ENCODE measurements at regions of chr9 and their contacts with region 1.

Region 1: DNA sequence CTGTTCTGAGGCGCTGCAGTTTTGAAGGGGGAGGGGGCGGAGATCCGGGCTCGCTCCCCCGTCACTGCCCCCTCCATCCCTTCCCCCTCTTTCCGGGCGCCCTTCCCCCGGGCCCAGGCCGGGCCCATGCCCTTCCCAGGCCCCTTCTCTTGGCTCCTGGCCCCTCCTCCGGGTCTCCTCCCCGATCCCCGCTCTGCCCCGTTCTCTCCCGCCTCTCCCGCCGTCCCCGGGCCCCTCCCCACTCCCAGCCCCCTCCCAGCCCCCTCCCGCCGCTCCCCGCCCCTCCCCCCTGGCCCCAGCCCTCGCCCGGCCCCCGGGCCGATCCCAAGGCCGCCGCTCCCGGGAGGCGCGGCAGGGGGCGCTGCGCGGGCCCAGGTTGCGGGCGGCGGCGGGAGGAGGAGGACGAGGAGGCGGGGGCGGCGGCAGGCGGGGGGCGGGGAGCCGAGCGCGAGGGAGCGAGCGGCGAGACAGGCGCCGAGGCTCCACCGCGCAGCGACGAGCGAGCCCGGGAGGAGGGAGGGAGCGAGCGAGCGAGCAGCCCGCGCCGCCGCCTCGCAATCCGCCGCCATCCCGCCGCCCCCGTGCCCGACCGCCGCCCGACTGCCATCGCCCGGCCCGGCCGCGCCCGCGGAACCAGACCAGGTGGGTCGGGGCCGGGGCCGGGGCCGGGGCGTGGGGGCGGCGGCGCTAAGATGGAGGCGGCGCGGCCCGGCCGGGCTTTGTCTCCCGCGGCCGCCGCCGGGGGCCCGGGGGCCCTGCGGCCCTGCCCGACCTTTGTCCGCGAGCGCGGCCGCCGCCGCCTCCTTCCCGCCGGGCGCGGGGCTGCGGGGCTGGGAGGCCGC is at the start of gene PRRC2B:
- DNase-seq: peak; percentile 76 to 96 (median 86)
- ATAC-seq: peak; percentile 45
- H3K4me3 ChIP-seq: peak within 1 kb of the TSS; percentile 65
- H3K4me3 Mint-ChIP-seq: peak within 1 kb of the TSS; percentile 95
- H3K27ac ChIP-seq: peak within 1 kb of the TSS; percentile 67 to 96
- H3K27ac Mint-ChIP-seq: peak within 1 kb of the TSS; percentile 96
- H3K4me1 ChIP-seq: peaks cover 50% of the 10 kb centered on the region
- H3K4me1 Mint-ChIP-seq: peaks cover 54% of the 10 kb centered on the region
- H3K27me3 ChIP-seq: no peaks in the 10 kb centered on the region
- H3K27me3 Mint-ChIP-seq: no peaks in the 10 kb centered on the region
- CTCF ChIP-seq: no peak
- total RNA-seq, gene PRRC2B: 256 to 268 TPM

Region 2: GRCh38 chr9:131277910-131278701 is 115.7 kb before region 1 on chr9:
- CTCF ChIA-PET with region 1: no interaction called
- POLR2A ChIA-PET with region 1: no interaction called
- intact Hi-C with region 1: loop called (anchors 5 kb)
- DNase-seq: peak; percentile 45 to 89 (median 66)
- ATAC-seq: peak; percentile 55
- H3K4me3 ChIP-seq: peak overlapping the region; percentile 99
- H3K4me3 Mint-ChIP-seq: peak overlapping the region; percentile 93
- H3K27ac ChIP-seq: peak overlapping the region; percentile 73 to 82
- H3K27ac Mint-ChIP-seq: peak overlapping the region; percentile 94
- H3K4me1 ChIP-seq: peaks cover 32% of the 10 kb centered on the region
- H3K4me1 Mint-ChIP-seq: peaks cover 32% of the 10 kb centered on the region
- H3K27me3 ChIP-seq: peaks cover 0 to 9% of the 10 kb centered on the region in 2 experiments
- H3K27me3 Mint-ChIP-seq: no peaks in the 10 kb centered on the region
- CTCF ChIP-seq: no peak

Region 3: DNA sequence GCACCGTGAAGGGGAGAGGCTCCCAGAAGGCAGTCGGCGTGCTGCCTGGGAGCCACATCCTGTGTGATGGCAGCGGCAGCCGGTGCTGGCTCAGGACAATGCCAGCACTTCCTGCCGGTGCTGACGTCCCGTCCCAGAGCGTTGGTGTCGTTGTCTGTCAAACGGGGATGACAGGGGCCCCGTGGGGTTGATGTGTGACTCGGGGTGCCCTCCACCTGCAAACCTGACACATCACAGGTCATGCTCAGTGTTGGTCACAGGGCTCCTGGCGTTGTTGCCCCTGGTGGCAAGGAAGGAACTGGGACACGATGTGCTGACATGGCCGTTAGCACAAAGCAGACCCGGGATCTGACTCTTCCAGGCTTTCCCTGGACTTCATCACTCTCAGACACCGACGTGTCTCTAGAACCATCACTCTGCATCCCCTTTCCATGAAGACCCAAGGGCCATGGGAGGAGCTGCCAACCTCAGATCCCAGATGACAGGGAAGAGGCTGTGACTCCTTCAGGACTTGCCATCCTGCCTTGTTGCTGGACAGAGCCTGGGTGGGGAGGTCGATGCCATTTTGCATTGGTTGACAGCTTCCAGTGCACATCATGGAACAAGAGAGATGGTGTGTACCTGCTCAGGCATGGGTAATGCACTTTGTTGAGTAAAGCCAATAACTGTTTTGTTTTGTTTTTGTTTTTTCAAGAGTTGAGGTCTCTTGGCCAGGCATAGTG is 82.8 kb before region 1 on chr9:
- CTCF ChIA-PET with region 1: no interaction called
- POLR2A ChIA-PET with region 1: no interaction called
- intact Hi-C with region 1: no loop called
- DNase-seq: peak; percentile 36 to 88 (median 60)
- ATAC-seq: peak; percentile 98
- H3K4me3 ChIP-seq: peak overlapping the region; percentile 40
- H3K4me3 Mint-ChIP-seq: peak overlapping the region; percentile 54
- H3K27ac ChIP-seq: no peak overlapping the region
- H3K27ac Mint-ChIP-seq: peak overlapping the region; percentile 73
- H3K4me1 ChIP-seq: peaks cover 15% of the 10 kb centered on the region
- H3K4me1 Mint-ChIP-seq: peaks cover 16% of the 10 kb centered on the region
- H3K27me3 ChIP-seq: no peaks in the 10 kb centered on the region
- H3K27me3 Mint-ChIP-seq: no peaks in the 10 kb centered on the region
- CTCF ChIP-seq: no peak

Region 4: GRCh38 chr9:131366761-131367401 is 27.0 kb before region 1 on chr9:
- CTCF ChIA-PET with region 1: no interaction called
- POLR2A ChIA-PET with region 1: interaction called, 13 read pairs
- intact Hi-C with region 1: no loop called
- DNase-seq: peak in 3 of 14 experiments; percentile 7 to 34 (median 25)
- ATAC-seq: no peak
- H3K4me3 ChIP-seq: no peak overlapping the region
- H3K4me3 Mint-ChIP-seq: no peak overlapping the region
- H3K27ac ChIP-seq: no peak overlapping the region
- H3K27ac Mint-ChIP-seq: no peak overlapping the region
- H3K4me1 ChIP-seq: peaks cover 2% of the 10 kb centered on the region
- H3K4me1 Mint-ChIP-seq: peaks cover 6% of the 10 kb centered on the region
- H3K27me3 ChIP-seq: no peaks in the 10 kb centered on the region
- H3K27me3 Mint-ChIP-seq: no peaks in the 10 kb centered on the region
- CTCF ChIP-seq: peak; percentile 40

Region 5: GRCh38 chr9:131418143-131419028 is 24.5 kb after region 1 on chr9:
- CTCF ChIA-PET with region 1: interaction called, 7 read pairs
- POLR2A ChIA-PET with region 1: interaction called, 26 read pairs
- intact Hi-C with region 1: no loop called
- DNase-seq: no peak
- ATAC-seq: no peak
- H3K4me3 ChIP-seq: no peak overlapping the region
- H3K4me3 Mint-ChIP-seq: peak overlapping the region; percentile 80
- H3K27ac ChIP-seq: no peak overlapping the region
- H3K27ac Mint-ChIP-seq: peak overlapping the region; percentile 70
- H3K4me1 ChIP-seq: peaks cover 84% of the 10 kb centered on the region
- H3K4me1 Mint-ChIP-seq: peaks cover 95% of the 10 kb centered on the region
- H3K27me3 ChIP-seq: no peaks in the 10 kb centered on the region
- H3K27me3 Mint-ChIP-seq: no peaks in the 10 kb centered on the region
- CTCF ChIP-seq: no peak

Region 6: DNA sequence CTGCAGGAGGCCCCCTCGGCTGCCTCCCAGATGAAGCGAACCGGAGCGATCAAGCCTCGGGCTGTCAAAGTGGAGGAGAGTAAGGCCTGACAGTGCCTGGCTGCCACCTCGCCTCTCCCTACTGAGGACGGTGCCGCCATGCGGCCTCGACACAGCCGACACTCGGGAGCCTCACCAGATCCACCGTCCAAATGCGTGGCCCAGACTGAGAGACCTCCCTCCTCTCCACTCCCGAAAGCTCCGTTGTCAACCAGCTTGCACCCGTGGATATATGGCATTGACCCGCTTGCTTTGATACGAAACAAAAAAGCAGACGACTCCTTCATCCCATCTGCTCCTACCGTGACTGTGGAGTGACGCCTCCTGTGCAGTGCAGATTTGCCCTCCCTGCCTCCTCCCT is 101.9 kb after region 1 on chr9:
- CTCF ChIA-PET with region 1: no interaction called
- POLR2A ChIA-PET with region 1: interaction called, 12 read pairs
- intact Hi-C with region 1: loop called in 1 of 2 experiments (anchors 5 kb)
- DNase-seq: no peak
- ATAC-seq: no peak
- H3K4me3 ChIP-seq: no peak overlapping the region
- H3K4me3 Mint-ChIP-seq: no peak overlapping the region
- H3K27ac ChIP-seq: no peak overlapping the region
- H3K27ac Mint-ChIP-seq: peak overlapping the region; percentile 55
- H3K4me1 ChIP-seq: peaks cover 35% of the 10 kb centered on the region
- H3K4me1 Mint-ChIP-seq: peaks cover 38% of the 10 kb centered on the region
- H3K27me3 ChIP-seq: no peaks in the 10 kb centered on the region
- H3K27me3 Mint-ChIP-seq: no peaks in the 10 kb centered on the region
- CTCF ChIP-seq: no peak

Region 7: DNA sequence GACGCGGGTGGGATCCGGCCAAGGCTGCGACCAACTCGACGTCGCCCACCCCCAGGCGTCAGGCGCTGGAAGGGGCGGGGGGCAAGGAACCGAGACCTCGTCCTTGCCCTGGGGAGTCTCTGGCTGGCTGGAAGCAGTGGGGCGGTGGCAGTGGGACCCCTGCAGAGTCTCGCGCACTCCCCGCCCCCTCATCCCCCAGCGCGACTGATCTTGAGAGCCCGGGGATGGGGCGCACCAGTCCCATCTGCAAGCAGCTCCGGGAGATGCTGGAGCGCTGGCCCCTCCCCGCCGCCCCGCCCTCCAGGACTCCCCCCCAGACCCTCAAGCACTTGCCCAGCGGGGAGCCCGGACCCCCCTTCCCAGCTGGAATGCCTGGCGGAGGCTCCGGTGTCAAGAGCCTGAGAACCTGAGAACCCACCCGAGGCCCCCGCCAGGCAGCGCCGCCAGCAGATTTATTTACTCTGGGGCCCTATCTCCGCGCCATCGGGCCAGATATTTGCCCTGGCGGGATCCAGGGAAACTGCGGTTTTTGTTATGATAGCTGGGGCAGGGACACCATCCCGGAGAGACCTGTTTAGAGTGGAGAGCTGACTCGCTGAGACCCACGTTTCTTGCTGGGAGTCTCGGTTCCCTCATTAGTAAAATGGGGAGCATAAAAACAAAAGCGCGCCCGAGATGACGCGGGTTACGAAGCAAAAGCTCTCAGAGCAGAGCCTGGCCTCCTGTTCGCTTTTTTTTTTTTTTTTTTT is 152.7 kb after region 1 on chr9:
- CTCF ChIA-PET with region 1: no interaction called
- POLR2A ChIA-PET with region 1: no interaction called
- intact Hi-C with region 1: no loop called
- DNase-seq: peak in 3 of 14 experiments; percentile 26 to 46 (median 27)
- ATAC-seq: peak; percentile 58
- H3K4me3 ChIP-seq: peak overlapping the region; percentile 47
- H3K4me3 Mint-ChIP-seq: peak overlapping the region; percentile 86
- H3K27ac ChIP-seq: no peak overlapping the region
- H3K27ac Mint-ChIP-seq: no peak overlapping the region
- H3K4me1 ChIP-seq: peaks cover 18% of the 10 kb centered on the region
- H3K4me1 Mint-ChIP-seq: peaks cover 18% of the 10 kb centered on the region
- H3K27me3 ChIP-seq: peaks cover 26 to 29% of the 10 kb centered on the region in 2 experiments
- H3K27me3 Mint-ChIP-seq: peaks cover 54% of the 10 kb centered on the region
- CTCF ChIP-seq: no peak